ENCODE measurements at regions of chr18 and their contacts with region 1.

Region 1: DNA sequence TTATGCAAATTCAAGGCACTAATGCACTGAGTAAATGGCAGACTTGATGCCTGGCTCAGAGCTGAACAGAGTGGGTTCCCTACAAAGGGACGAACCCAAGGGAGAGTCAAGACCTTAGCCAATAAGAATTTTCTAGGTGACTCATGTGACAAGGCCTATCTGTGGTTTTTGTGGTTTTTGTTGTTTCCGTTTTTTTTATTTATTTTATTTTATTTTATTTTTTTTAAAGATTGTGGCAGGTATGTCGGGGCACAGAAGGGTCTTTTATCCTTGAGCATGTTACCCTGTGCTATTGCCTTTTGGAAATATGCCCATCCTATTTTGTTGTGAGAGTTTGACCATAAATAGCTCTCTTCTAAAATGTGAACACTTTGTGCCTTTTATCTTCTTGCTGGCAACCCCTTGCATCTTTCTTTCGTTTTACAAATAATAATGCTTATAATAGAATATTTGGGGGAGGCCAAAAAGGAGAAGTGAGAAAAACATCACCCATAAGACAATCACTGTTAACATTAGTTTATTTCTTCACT is 113.4 kb upstream of the AQP4 start:
- DNase-seq: no peak
- ATAC-seq: no peak
- H3K4me3 ChIP-seq: no peak overlapping the region
- H3K27ac ChIP-seq: no peak overlapping the region
- H3K4me1 ChIP-seq: no peaks in the 10 kb centered on the region
- H3K27me3 ChIP-seq: no peaks in the 10 kb centered on the region
- CTCF ChIP-seq: no peak
- EP300 ChIP-seq: no peak
- POLR2A ChIP-seq: no peak
- RAD21 ChIP-seq: no peak

Region 2: GRCh38 chr18:26919627-26920026 is 59.2 kb before region 1 on chr18:
- CTCF ChIA-PET with region 1: no interaction called
- POLR2A ChIA-PET with region 1: no interaction called
- in situ Hi-C with region 1: no loop called
- intact Hi-C with region 1: loop called (anchors 10 kb)
- DNase-seq: no peak
- ATAC-seq: no peak
- H3K4me3 ChIP-seq: no peak overlapping the region
- H3K27ac ChIP-seq: no peak overlapping the region
- H3K4me1 ChIP-seq: peaks cover 19% of the 10 kb centered on the region
- H3K27me3 ChIP-seq: no peaks in the 10 kb centered on the region
- CTCF ChIP-seq: no peak
- EP300 ChIP-seq: no peak
- POLR2A ChIP-seq: no peak
- RAD21 ChIP-seq: no peak

Measured in HepG2 (cell line).